CD8-positive, alpha-beta T cell (primary cell): ENCODE measurements at regions of chr11 and their contacts with region 1.

Region 1: GRCh38 chr11:88552377-88553062 is 215.0 kb upstream of the CTSC start:
- DNase-seq: peak in 8 of 9 experiments; percentile 13 to 70 (median 41)
- ATAC-seq: peak; percentile 38
- H3K4me3 ChIP-seq: no peak overlapping the region
- H3K4me3 Mint-ChIP-seq: no peak overlapping the region
- H3K27ac ChIP-seq: no peak overlapping the region
- H3K27ac Mint-ChIP-seq: no peak overlapping the region
- H3K4me1 ChIP-seq: no peaks in the 10 kb centered on the region
- H3K4me1 Mint-ChIP-seq: peaks cover 3% of the 10 kb centered on the region
- H3K27me3 ChIP-seq: no peaks in the 10 kb centered on the region
- H3K27me3 Mint-ChIP-seq: peaks cover 3% of the 10 kb centered on the region
- CTCF ChIP-seq: peak; percentile 62

Region 2: GRCh38 chr11:88016392-88017170 is 535.9 kb before region 1 on chr11:
- CTCF ChIA-PET with region 1: interaction called, 32 read pairs
- POLR2A ChIA-PET with region 1: no interaction called
- intact Hi-C with region 1: no loop called
- DNase-seq: peak in 8 of 9 experiments; percentile 17 to 73 (median 52)
- ATAC-seq: peak; percentile 40
- H3K4me3 ChIP-seq: no peak overlapping the region
- H3K4me3 Mint-ChIP-seq: no peak overlapping the region
- H3K27ac ChIP-seq: no peak overlapping the region
- H3K27ac Mint-ChIP-seq: no peak overlapping the region
- H3K4me1 ChIP-seq: no peaks in the 10 kb centered on the region
- H3K4me1 Mint-ChIP-seq: no peaks in the 10 kb centered on the region
- H3K27me3 ChIP-seq: no peaks in the 10 kb centered on the region
- H3K27me3 Mint-ChIP-seq: no peaks in the 10 kb centered on the region
- CTCF ChIP-seq: peak; percentile 66

Region 3: GRCh38 chr11:88231894-88232482 is 320.5 kb before region 1 on chr11:
- CTCF ChIA-PET with region 1: interaction called, 48 read pairs
- POLR2A ChIA-PET with region 1: no interaction called
- intact Hi-C with region 1: no loop called
- DNase-seq: peak in 2 of 9 experiments; percentile 38 to 51
- ATAC-seq: peak; percentile 40
- H3K4me3 ChIP-seq: no peak overlapping the region
- H3K4me3 Mint-ChIP-seq: no peak overlapping the region
- H3K27ac ChIP-seq: no peak overlapping the region
- H3K27ac Mint-ChIP-seq: no peak overlapping the region
- H3K4me1 ChIP-seq: no peaks in the 10 kb centered on the region
- H3K4me1 Mint-ChIP-seq: no peaks in the 10 kb centered on the region
- H3K27me3 ChIP-seq: no peaks in the 10 kb centered on the region
- H3K27me3 Mint-ChIP-seq: no peaks in the 10 kb centered on the region
- CTCF ChIP-seq: peak; percentile 50

Region 4: DNA sequence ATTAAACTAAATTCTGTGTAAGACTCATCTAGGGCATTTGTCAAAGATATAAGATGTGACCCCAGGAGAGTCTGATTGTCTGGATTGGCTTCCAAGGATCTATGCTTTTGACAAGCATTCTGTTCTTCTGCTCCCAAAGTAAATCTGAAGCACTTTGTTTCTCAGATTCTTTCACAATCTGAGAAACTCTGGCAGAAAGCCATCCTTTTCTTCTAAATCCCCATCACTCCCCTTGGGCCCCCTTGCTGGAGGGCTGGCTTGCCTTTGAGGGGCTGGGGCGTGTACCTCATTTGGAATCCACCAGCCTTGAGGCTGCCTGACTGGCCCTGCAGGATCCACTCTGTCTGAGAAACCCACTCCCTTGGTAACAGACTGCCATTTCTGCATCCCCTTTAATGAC is 41.5 kb before region 1 on chr11:
- CTCF ChIA-PET with region 1: no interaction called
- POLR2A ChIA-PET with region 1: no interaction called
- intact Hi-C with region 1: no loop called
- DNase-seq: no peak
- ATAC-seq: no peak
- H3K4me3 ChIP-seq: no peak overlapping the region
- H3K4me3 Mint-ChIP-seq: no peak overlapping the region
- H3K27ac ChIP-seq: no peak overlapping the region
- H3K27ac Mint-ChIP-seq: no peak overlapping the region
- H3K4me1 ChIP-seq: peaks cover 4% of the 10 kb centered on the region
- H3K4me1 Mint-ChIP-seq: peaks cover 16% of the 10 kb centered on the region
- H3K27me3 ChIP-seq: peaks cover 13 to 22% of the 10 kb centered on the region in 2 experiments
- H3K27me3 Mint-ChIP-seq: peaks cover 62% of the 10 kb centered on the region
- CTCF ChIP-seq: no peak

Region 5: GRCh38 chr11:88535916-88536547 is 16.5 kb before region 1 on chr11:
- CTCF ChIA-PET with region 1: interaction called, 14 read pairs
- POLR2A ChIA-PET with region 1: interaction called, 3 read pairs
- intact Hi-C with region 1: no loop called
- DNase-seq: no peak
- ATAC-seq: no peak
- H3K4me3 ChIP-seq: no peak overlapping the region
- H3K4me3 Mint-ChIP-seq: no peak overlapping the region
- H3K27ac ChIP-seq: no peak overlapping the region
- H3K27ac Mint-ChIP-seq: no peak overlapping the region
- H3K4me1 ChIP-seq: no peaks in the 10 kb centered on the region
- H3K4me1 Mint-ChIP-seq: no peaks in the 10 kb centered on the region
- H3K27me3 ChIP-seq: no peaks in the 10 kb centered on the region
- H3K27me3 Mint-ChIP-seq: peaks cover 3% of the 10 kb centered on the region
- CTCF ChIP-seq: no peak

Region 6: GRCh38 chr11:88569342-88569741 is 16.8 kb after region 1 on chr11:
- CTCF ChIA-PET with region 1: interaction called, 16 read pairs
- POLR2A ChIA-PET with region 1: no interaction called
- intact Hi-C with region 1: no loop called
- DNase-seq: no peak
- ATAC-seq: no peak
- H3K4me3 ChIP-seq: no peak overlapping the region
- H3K4me3 Mint-ChIP-seq: no peak overlapping the region
- H3K27ac ChIP-seq: no peak overlapping the region
- H3K27ac Mint-ChIP-seq: no peak overlapping the region
- H3K4me1 ChIP-seq: no peaks in the 10 kb centered on the region
- H3K4me1 Mint-ChIP-seq: no peaks in the 10 kb centered on the region
- H3K27me3 ChIP-seq: no peaks in the 10 kb centered on the region
- H3K27me3 Mint-ChIP-seq: no peaks in the 10 kb centered on the region
- CTCF ChIP-seq: no peak

Region 7: DNA sequence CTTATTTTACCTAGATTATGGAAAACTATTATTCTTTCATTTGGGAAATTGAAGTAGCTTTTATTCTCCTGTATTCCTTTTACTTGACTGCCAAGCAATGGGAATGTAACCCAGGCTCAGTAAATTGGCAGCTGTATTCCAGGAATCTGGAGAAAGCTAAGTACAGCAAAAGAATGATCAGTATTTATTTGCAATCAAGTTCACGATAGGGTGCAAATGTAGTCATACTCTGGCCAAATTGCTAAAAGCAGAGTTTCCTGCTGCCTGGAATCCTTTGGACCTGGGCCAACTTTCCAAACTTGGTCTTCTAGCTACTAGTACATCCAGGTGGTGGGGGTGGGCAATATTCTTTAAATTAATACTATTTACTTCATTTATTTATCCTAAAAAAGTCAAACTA is 71.0 kb after region 1 on chr11:
- CTCF ChIA-PET with region 1: no interaction called
- POLR2A ChIA-PET with region 1: no interaction called
- intact Hi-C with region 1: no loop called
- DNase-seq: no peak
- ATAC-seq: no peak
- H3K4me3 ChIP-seq: no peak overlapping the region
- H3K4me3 Mint-ChIP-seq: no peak overlapping the region
- H3K27ac ChIP-seq: no peak overlapping the region
- H3K27ac Mint-ChIP-seq: no peak overlapping the region
- H3K4me1 ChIP-seq: no peaks in the 10 kb centered on the region
- H3K4me1 Mint-ChIP-seq: no peaks in the 10 kb centered on the region
- H3K27me3 ChIP-seq: no peaks in the 10 kb centered on the region
- H3K27me3 Mint-ChIP-seq: no peaks in the 10 kb centered on the region
- CTCF ChIP-seq: no peak